BJ (cell line): ENCODE measurements at regions of chr2 and their contacts with region 1.

Region 1: GRCh38 chr2:174688079-174688478 is 76.2 kb downstream of the CHRNA1 start:
- DNase-seq: no peak
- H3K4me3 ChIP-seq: no peak overlapping the region
- H3K27me3 ChIP-seq: peaks cover 3% of the 10 kb centered on the region
- CTCF ChIP-seq: peak; percentile 42; the same call in 1 of the 2 replicates

Region 2: DNA sequence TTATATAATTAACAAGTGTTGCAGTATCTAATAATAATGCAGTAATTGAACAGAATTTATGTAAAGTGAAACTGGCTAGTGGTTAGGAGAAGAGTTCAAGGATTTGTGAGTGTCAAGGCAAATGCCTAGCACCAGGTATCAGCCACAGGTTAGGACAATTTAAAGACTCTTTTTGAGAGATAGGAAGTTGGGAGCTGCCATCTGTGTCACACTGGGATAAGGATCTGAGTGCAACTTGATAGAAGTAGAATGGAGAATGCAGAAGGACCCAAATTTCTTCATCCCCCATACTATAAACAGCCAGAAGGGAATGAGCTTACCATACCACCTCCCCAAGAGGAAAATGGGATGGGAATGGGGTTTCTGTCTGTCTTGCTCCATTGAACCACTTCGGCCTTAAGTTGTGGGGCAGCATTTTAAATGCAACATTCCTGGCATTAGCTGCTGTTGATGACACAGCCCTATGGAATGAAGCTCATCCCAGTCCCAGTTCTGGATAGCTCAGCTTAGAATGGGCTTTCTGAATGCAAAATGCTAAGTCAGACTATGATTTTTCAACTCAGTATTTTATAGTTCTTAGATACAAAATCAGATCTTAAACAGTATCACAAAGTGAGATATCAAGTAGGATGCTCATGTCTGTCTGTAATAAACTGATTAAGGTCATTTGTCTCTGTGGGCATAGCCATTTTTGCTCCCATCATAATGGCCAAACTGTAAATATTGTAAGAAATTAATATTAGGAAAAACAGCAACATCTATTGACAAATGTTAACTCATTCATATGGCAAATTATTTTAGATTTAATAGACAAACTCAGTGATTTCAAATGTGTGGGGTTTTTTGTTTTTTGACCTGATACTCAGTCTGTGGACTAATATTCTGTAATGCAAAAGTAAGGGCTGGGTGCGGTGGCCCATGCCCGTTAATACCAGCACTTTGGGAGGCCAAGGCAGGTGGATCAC is 245.3 kb before region 1 on chr2:
- CTCF ChIA-PET with region 1: no interaction called
- POLR2A ChIA-PET with region 1: no interaction called
- DNase-seq: peak; percentile 59
- H3K4me3 ChIP-seq: no peak overlapping the region
- H3K27me3 ChIP-seq: no peaks in the 10 kb centered on the region
- CTCF ChIP-seq: no peak

Region 3: DNA sequence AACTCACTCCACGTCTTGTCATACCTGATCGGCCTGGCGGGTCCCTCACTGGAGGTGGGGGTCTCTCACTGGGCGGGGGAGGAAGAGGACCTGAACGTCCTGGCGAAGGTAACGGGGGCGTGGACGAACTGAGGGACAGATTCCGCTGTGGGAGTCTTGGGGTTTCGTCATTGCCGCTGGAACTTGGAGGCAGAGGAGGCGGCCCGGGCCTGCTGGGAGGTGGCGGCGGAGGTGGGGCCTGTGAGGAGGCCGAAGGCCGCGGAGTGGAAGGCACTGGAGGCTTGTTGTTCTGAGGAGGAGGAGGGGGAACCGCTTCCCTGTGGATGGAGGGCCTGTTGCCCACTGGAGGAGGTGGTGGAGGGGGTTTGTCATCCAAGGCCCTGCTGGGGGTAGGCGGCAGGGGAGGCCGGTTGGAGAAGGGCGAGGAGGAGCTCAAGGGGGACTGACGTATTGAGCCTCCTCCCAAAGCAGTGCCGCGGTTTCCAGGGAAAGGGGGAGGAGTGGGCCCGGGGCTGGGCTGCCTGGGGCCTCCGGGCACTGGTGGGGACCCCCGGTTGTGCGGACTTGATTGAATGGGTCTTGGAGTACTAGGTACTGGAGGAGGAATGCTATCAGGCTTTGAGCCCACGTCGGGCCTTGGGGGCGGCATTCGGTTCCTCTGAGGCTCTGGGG is 116.3 kb before region 1 on chr2:
- CTCF ChIA-PET with region 1: interaction called, 86 read pairs
- POLR2A ChIA-PET with region 1: interaction called, 6 read pairs
- DNase-seq: no peak
- H3K4me3 ChIP-seq: no peak overlapping the region
- H3K27me3 ChIP-seq: no peaks in the 10 kb centered on the region
- CTCF ChIP-seq: no peak

Region 4: GRCh38 chr2:174577967-174578589 is 110.0 kb before region 1 on chr2:
- CTCF ChIA-PET with region 1: interaction called, 86 read pairs
- POLR2A ChIA-PET with region 1: interaction called, 6 read pairs
- DNase-seq: no peak
- H3K4me3 ChIP-seq: no peak overlapping the region
- H3K27me3 ChIP-seq: no peaks in the 10 kb centered on the region
- CTCF ChIP-seq: peak; percentile 82

Region 5: GRCh38 chr2:174663550-174663949 is 24.5 kb before region 1 on chr2:
- CTCF ChIA-PET with region 1: interaction called, 12 read pairs
- POLR2A ChIA-PET with region 1: interaction called, 4 read pairs
- DNase-seq: peak; percentile 88
- H3K4me3 ChIP-seq: no peak overlapping the region
- H3K27me3 ChIP-seq: no peaks in the 10 kb centered on the region
- CTCF ChIP-seq: no peak

Region 6: DNA sequence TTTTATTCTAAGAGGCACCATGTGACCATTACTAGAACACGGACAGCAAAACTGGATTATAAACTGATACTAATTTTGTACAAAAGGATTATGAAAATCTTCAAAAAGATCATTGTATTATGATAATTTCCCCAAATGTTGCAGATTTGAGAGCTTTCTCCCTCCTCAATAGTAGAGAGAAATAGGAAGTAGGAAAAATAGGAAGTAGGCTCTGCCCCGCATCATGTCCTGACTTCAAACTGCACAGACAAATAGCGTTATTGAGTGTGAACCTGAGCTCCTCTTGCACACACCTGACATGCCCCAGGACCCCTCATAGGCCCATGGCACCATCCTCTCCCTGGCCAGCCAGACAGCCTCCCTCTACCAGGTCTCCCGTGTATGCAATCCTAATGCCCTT is 50.8 kb after region 1 on chr2:
- CTCF ChIA-PET with region 1: no interaction called
- POLR2A ChIA-PET with region 1: no interaction called
- DNase-seq: no peak
- H3K4me3 ChIP-seq: no peak overlapping the region
- H3K27me3 ChIP-seq: peaks cover 12% of the 10 kb centered on the region
- CTCF ChIP-seq: no peak

Region 7: GRCh38 chr2:174878537-174879147 is 190.6 kb after region 1 on chr2:
- CTCF ChIA-PET with region 1: no interaction called
- POLR2A ChIA-PET with region 1: no interaction called
- DNase-seq: no peak
- H3K4me3 ChIP-seq: peak overlapping the region; percentile 17; the same call in 1 of the 2 replicates
- H3K27me3 ChIP-seq: no peaks in the 10 kb centered on the region
- CTCF ChIP-seq: no peak

Region 8: GRCh38 chr2:174981331-174981730 is 293.3 kb after region 1 on chr2:
- CTCF ChIA-PET with region 1: no interaction called
- POLR2A ChIA-PET with region 1: no interaction called
- DNase-seq: no peak
- H3K4me3 ChIP-seq: no peak overlapping the region
- H3K27me3 ChIP-seq: no peaks in the 10 kb centered on the region
- CTCF ChIP-seq: no peak